GM12878 (cell line): ENCODE measurements at regions of chr13 and their contacts with region 1.

Region 1: DNA sequence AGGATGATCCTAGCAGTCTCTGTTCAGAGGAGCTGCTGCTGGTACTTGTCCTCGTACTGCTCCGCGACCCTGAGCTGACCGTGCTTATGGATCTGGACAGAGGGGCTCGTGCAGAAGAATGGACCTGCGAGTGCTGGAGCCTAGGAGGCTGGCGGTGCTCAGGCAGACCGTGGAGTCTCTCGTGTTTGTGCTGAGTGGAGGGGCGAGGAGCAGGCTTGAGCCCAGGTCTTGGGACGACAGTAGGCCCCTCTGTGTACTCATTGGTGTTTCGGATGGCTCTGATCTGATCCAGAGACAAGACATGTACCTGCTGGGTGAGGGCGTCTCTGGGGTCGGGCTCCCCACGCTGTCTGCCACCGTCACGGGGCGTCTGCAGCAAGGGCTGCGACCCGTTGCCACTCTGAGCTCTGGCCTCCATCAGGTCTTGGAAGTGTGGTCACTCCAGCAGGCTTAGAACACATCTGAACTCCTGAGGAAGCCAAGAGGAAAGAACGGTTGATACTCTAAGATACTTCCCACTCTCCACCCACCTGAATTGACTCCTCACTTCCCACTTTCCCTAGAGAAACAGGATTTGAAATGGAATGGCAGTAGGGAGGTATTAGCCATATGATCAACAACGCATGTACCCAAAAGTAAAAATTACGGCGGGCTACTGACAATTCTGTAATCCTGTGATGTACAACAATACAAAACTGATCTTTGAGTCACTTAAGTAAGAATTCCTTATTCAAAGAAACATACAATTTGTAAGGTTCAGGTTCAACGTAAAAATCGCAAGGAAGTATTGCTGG is 3.4 kb downstream of the SPRY2 start:
- DNase-seq: no peak
- ATAC-seq: no peak
- H3K4me3 ChIP-seq: no peak overlapping the region
- H3K27ac ChIP-seq: no peak overlapping the region
- H3K4me1 ChIP-seq: no peaks in the 10 kb centered on the region
- H3K27me3 ChIP-seq: no peaks in the 10 kb centered on the region; a peak in 1 of 4 replicates
- CTCF ChIP-seq: no peak
- EP300 ChIP-seq: no peak
- POLR2A ChIP-seq: no peak
- RAD21 ChIP-seq: no peak

Region 2: GRCh38 chr13:79775830-79776229 is 561.7 kb before region 1 on chr13:
- CTCF ChIA-PET with region 1: interaction called, 8 read pairs
- POLR2A ChIA-PET with region 1: interaction called, 3 read pairs
- RAD21 ChIA-PET with region 1: interaction called, 31 read pairs
- SMC1A ChIA-PET with region 1: interaction called, 14 read pairs
- in situ Hi-C with region 1: no loop called
- intact Hi-C with region 1: loop called (anchors 5 kb)
- DNase-seq: no peak
- ATAC-seq: peak; percentile 86
- H3K4me3 ChIP-seq: no peak overlapping the region
- H3K27ac ChIP-seq: no peak overlapping the region
- H3K4me1 ChIP-seq: no peaks in the 10 kb centered on the region
- H3K27me3 ChIP-seq: no peaks in the 10 kb centered on the region
- CTCF ChIP-seq: peak; percentile 60 to 78 (median 65)
- EP300 ChIP-seq: no peak
- POLR2A ChIP-seq: no peak
- RAD21 ChIP-seq: peak; percentile 94

Region 3: GRCh38 chr13:79987323-79987722 is 350.2 kb before region 1 on chr13:
- CTCF ChIA-PET with region 1: no interaction called
- POLR2A ChIA-PET with region 1: no interaction called
- RAD21 ChIA-PET with region 1: no interaction called
- SMC1A ChIA-PET with region 1: no interaction called
- in situ Hi-C with region 1: no loop called
- intact Hi-C with region 1: no loop called
- DNase-seq: no peak
- ATAC-seq: no peak
- H3K4me3 ChIP-seq: no peak overlapping the region
- H3K27ac ChIP-seq: no peak overlapping the region
- H3K4me1 ChIP-seq: no peaks in the 10 kb centered on the region
- H3K27me3 ChIP-seq: no peaks in the 10 kb centered on the region
- CTCF ChIP-seq: no peak
- EP300 ChIP-seq: no peak
- POLR2A ChIP-seq: no peak
- RAD21 ChIP-seq: no peak

Region 4: GRCh38 chr13:80048802-80049201 is 288.7 kb before region 1 on chr13:
- CTCF ChIA-PET with region 1: interaction called, 6 read pairs
- POLR2A ChIA-PET with region 1: interaction called, 9 read pairs
- RAD21 ChIA-PET with region 1: interaction called, 43 read pairs
- SMC1A ChIA-PET with region 1: interaction called, 19 read pairs
- in situ Hi-C with region 1: no loop called
- intact Hi-C with region 1: no loop called
- DNase-seq: peak; percentile 89
- ATAC-seq: peak; percentile 98
- H3K4me3 ChIP-seq: no peak overlapping the region
- H3K27ac ChIP-seq: peak overlapping the region; percentile 18; the same call in 1 of the 2 replicates
- H3K4me1 ChIP-seq: peaks cover 21% of the 10 kb centered on the region
- H3K27me3 ChIP-seq: no peaks in the 10 kb centered on the region
- CTCF ChIP-seq: no peak
- EP300 ChIP-seq: peak; percentile 94 to 98
- POLR2A ChIP-seq: no peak
- RAD21 ChIP-seq: no peak

Region 5: GRCh38 chr13:80226645-80227044 is 110.8 kb before region 1 on chr13:
- CTCF ChIA-PET with region 1: interaction called, 4 read pairs
- POLR2A ChIA-PET with region 1: no interaction called
- RAD21 ChIA-PET with region 1: no interaction called
- SMC1A ChIA-PET with region 1: interaction called, 10 read pairs
- in situ Hi-C with region 1: no loop called
- intact Hi-C with region 1: no loop called
- DNase-seq: no peak
- ATAC-seq: peak; percentile 77
- H3K4me3 ChIP-seq: no peak overlapping the region
- H3K27ac ChIP-seq: no peak overlapping the region
- H3K4me1 ChIP-seq: no peaks in the 10 kb centered on the region
- H3K27me3 ChIP-seq: no peaks in the 10 kb centered on the region
- CTCF ChIP-seq: no peak
- EP300 ChIP-seq: no peak
- POLR2A ChIP-seq: no peak
- RAD21 ChIP-seq: no peak

Region 6: DNA sequence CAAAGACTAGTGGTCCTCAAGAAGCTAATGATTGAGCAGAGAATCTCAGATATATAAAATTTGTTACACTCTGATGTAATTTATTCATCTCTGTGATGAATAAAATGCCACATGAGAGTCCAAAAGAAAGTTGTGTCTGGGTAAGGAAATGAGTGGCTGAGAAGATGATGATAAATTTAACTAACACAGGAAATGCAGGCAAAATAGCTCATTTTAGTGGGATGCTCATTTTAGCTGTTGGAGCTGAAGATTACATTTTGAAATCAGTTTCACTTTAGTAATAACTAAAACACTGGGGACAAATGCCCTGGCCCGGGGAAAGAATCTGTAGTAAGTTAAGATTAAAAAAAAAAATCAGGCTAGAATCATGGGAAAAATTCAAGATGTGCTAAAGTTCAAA is 31.7 kb before region 1 on chr13:
- CTCF ChIA-PET with region 1: interaction called, 5 read pairs
- POLR2A ChIA-PET with region 1: interaction called, 8 read pairs
- RAD21 ChIA-PET with region 1: interaction called, 8 read pairs
- SMC1A ChIA-PET with region 1: interaction called, 13 read pairs
- in situ Hi-C with region 1: no loop called
- intact Hi-C with region 1: no loop called
- DNase-seq: no peak
- ATAC-seq: peak; percentile 51
- H3K4me3 ChIP-seq: no peak overlapping the region
- H3K27ac ChIP-seq: no peak overlapping the region
- H3K4me1 ChIP-seq: no peaks in the 10 kb centered on the region
- H3K27me3 ChIP-seq: no peaks in the 10 kb centered on the region
- CTCF ChIP-seq: no peak
- EP300 ChIP-seq: no peak
- POLR2A ChIP-seq: no peak
- RAD21 ChIP-seq: no peak

Region 7: GRCh38 chr13:80504453-80504852 is 167.0 kb after region 1 on chr13:
- CTCF ChIA-PET with region 1: no interaction called
- POLR2A ChIA-PET with region 1: no interaction called
- RAD21 ChIA-PET with region 1: no interaction called
- SMC1A ChIA-PET with region 1: no interaction called
- in situ Hi-C with region 1: no loop called
- intact Hi-C with region 1: no loop called
- DNase-seq: no peak
- ATAC-seq: no peak
- H3K4me3 ChIP-seq: no peak overlapping the region
- H3K27ac ChIP-seq: no peak overlapping the region
- H3K4me1 ChIP-seq: no peaks in the 10 kb centered on the region
- H3K27me3 ChIP-seq: no peaks in the 10 kb centered on the region
- CTCF ChIP-seq: no peak
- EP300 ChIP-seq: no peak
- POLR2A ChIP-seq: no peak
- RAD21 ChIP-seq: no peak